ENCODE measurements at regions of chr9 and their contacts with region 1.

Region 1: DNA sequence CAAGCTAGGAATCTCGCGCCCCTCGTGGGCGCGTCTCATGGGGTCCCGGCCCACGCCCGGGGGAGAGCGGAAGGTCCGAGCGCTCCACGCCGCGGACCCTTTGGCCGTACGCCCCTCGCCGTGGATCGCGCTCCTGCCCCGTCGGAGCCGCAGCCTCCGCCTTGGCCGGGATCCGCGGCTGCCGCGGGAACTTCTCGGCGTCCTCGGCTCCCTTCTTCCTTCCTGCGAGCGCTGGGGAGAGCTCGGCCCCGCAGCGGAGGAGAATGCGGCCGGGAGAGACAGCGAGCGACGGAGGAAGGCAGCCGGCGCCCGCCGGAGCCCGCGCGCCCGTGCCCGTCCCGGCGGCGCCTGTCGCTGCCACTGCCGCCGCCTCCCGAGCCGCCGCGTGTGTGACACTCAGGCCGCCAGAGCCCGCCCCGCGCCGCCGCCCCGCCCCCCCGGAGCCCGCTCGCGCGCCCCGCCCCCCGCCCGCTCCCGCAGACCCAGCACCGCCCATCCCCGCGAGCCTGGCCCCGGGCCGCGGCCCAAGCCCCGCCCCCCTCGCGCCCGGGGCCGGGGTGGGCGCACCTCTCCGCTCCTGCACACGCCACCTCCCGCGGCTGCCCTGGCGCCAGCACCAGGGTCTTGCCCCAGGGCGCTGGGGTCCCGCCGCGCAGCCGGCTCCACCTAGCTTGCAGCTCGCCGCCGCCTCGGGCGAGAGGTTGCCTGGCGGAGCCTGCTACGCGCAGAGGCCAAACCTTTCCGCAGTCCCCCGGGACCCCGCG is at the start of gene SHB:
- DNase-seq: peak; percentile 65
- H3K4me3 Mint-ChIP-seq: peak within 1 kb of the TSS; percentile 78
- H3K27ac Mint-ChIP-seq: peak within 1 kb of the TSS; percentile 4
- H3K4me1 Mint-ChIP-seq: peaks cover 23% of the 10 kb centered on the region
- H3K27me3 Mint-ChIP-seq: peaks cover 30% of the 10 kb centered on the region
- total RNA-seq, gene SHB: 1.2 and 1.7 TPM in 2 replicates

Region 2: GRCh38 chr9:37079370-37080164 is 989.5 kb before region 1 on chr9:
- intact Hi-C with region 1: loop called (anchors 2 kb)
- DNase-seq: peak; percentile 92
- H3K4me3 Mint-ChIP-seq: peak overlapping the region; percentile 95
- H3K27ac Mint-ChIP-seq: peak overlapping the region; percentile 97
- H3K4me1 Mint-ChIP-seq: peaks cover 44% of the 10 kb centered on the region
- H3K27me3 Mint-ChIP-seq: peaks cover 2% of the 10 kb centered on the region

Region 3: GRCh38 chr9:37582548-37583157 is 486.4 kb before region 1 on chr9:
- intact Hi-C with region 1: loop called (anchors 10 kb)
- DNase-seq: no peak
- H3K4me3 Mint-ChIP-seq: no peak overlapping the region
- H3K27ac Mint-ChIP-seq: no peak overlapping the region
- H3K4me1 Mint-ChIP-seq: peaks cover 25% of the 10 kb centered on the region
- H3K27me3 Mint-ChIP-seq: no peaks in the 10 kb centered on the region

Region 4: DNA sequence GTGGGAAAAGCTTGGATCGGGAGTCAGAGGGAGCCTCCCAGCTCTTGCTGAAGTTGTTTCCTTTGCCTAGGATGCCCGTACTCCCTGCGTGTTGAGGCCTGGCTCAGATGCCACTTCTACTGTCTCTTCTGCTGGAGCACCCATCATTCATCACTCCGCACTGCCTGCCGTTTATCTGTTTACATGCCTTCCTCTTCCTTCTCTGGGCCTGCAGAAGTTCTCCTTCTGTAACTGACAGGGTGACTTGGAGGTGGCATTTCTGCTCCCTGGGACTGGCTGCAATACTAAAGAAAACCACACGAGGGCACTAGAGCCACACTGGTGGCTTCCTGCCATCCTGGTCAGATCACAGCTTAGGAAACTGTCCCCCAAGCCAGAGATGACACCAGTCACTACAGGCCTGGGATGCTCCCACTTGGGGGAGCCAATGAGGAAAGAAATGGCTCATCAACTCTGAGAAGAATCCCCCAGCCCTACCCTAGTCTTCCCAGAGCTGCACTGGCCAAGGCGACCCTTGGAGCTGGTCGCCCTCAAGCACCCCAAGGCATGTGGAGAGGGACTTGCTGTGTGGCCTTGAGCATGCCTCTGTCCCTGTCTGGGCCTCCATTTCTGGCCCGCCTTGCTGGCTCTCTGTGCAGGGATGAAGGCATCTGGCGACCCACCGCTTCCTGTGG is 155.4 kb before region 1 on chr9:
- intact Hi-C with region 1: loop called (anchors 1 kb)
- DNase-seq: peak; percentile 65
- H3K4me3 Mint-ChIP-seq: no peak overlapping the region
- H3K27ac Mint-ChIP-seq: no peak overlapping the region
- H3K4me1 Mint-ChIP-seq: peaks cover 10% of the 10 kb centered on the region
- H3K27me3 Mint-ChIP-seq: no peaks in the 10 kb centered on the region

Region 5: GRCh38 chr9:37943329-37944265 is 125.5 kb before region 1 on chr9:
- intact Hi-C with region 1: no loop called
- DNase-seq: no peak
- H3K4me3 Mint-ChIP-seq: no peak overlapping the region
- H3K27ac Mint-ChIP-seq: no peak overlapping the region
- H3K4me1 Mint-ChIP-seq: no peaks in the 10 kb centered on the region
- H3K27me3 Mint-ChIP-seq: no peaks in the 10 kb centered on the region

Region 6: DNA sequence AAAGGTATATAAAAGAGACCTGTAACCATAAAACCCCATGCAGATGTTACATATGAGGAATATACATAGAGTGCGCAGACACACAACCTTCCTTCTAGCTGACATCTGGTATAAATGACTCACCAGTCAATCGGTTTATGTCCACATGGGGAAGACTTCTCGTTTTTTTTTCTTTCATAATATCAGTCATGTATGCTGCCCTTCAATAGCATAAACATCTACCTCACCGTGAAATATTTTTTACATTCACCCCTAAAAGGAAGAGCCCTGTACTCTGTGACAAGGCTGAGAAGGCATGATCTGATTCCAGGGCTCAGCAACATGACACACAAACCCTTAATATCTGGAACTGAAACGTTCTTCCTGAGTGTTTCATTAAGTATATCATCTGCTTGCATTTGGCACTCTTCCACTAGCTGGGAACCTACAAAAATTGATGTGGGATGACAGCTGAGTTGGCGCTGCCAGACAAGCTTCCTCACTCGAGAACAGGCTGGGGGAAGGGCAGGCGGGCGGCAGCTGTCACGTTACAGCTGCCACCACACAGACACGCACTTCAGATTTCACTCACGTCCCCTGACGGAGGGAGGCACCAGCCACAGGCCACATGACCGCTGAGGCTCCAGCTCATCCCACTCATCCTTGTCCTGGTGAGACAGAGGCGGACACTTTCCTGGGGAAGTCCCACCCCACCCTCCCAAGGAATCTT is 74.3 kb before region 1 on chr9:
- intact Hi-C with region 1: loop called (anchors 5 kb)
- DNase-seq: no peak
- H3K4me3 Mint-ChIP-seq: peak overlapping the region; percentile 16
- H3K27ac Mint-ChIP-seq: peak overlapping the region; percentile 26
- H3K4me1 Mint-ChIP-seq: peaks cover 23% of the 10 kb centered on the region
- H3K27me3 Mint-ChIP-seq: no peaks in the 10 kb centered on the region

Region 7: DNA sequence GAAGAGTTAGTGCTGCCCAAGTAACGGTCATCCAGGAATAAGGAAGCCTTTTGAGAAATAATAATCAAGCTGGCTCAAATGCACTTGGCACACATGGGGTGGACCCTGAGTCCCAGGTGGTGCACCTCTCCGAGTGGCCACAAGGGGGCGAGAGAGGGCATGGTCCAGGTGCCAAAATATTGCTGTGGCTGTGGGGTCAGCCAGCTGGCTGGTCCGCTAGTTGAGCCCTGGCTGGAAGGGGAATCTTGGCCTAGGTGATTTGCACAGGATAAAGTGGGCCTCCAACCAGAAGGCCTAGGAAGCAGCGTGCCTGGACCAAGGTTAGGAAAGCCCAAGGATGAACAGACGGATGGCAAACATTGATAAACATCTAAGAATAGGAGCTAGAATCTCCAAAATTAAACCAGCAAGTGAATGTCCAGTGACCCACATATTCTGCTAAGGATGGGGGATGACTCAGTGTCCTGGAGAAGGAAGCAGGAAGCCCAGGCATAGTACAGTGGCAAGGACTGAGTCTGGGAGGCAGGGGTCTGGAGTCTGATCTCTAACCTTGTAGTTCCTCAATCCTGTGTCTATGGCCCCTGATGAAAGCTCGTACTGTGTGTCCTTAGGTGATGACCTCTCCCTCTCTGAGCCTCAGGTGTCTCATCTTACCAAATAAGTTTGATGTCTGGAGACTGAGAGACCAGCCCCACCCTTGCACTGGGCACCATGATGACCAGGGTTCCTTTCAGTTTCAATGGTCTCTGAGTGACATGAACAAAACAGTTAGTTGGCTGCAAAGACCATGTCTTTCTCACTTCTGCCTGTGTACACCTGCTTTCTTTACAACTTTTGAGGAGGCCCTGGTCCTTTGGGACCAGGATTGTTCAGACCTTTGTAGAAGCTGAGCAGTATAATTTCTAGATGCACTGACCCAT is 19.2 kb after region 1 on chr9:
- intact Hi-C with region 1: loop called (anchors 1 kb)
- DNase-seq: peak; percentile 55
- H3K4me3 Mint-ChIP-seq: no peak overlapping the region
- H3K27ac Mint-ChIP-seq: no peak overlapping the region
- H3K4me1 Mint-ChIP-seq: peaks cover 5% of the 10 kb centered on the region
- H3K27me3 Mint-ChIP-seq: peaks cover 22% of the 10 kb centered on the region